ENCODE measurements at regions of chr2 and their contacts with region 1.

Region 1: DNA sequence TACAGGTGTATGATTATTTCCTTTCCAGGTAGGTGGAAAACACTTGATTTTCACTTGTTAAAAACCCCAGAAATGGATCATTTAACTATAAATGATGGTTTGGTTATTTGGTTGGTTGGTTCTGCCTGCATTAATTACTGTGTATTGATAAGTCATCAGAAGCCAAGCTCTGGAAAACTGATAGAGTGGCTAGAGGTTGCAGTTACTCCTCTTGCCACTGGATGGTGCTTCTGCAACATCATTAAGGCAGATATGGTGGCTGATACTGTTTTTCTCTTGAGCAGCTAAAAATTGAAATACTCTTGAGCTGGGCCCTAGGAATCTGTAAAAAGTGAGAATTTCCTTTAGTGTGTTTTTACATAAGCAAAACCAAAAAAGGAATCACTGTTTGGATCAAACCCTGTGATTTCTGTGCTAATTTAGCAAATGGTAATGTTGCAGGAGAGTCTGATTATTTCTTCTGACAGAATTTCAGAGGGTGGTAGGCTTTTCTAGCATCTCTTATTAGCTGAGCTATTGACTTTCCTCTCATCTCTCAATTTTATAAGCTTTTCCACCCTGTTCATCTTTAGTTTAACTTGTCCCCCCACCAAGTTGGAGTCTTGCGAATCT is 54.3 kb downstream of the RAB10 start:
- DNase-seq: peak; percentile 37
- H3K4me3 ChIP-seq: no peak overlapping the region
- H3K27ac ChIP-seq: no peak overlapping the region
- H3K4me1 ChIP-seq: no peaks in the 10 kb centered on the region
- H3K27me3 ChIP-seq: no peaks in the 10 kb centered on the region
- CTCF ChIP-seq: peak; percentile 56 to 63
- POLR2A ChIP-seq: no peak

Region 2: DNA sequence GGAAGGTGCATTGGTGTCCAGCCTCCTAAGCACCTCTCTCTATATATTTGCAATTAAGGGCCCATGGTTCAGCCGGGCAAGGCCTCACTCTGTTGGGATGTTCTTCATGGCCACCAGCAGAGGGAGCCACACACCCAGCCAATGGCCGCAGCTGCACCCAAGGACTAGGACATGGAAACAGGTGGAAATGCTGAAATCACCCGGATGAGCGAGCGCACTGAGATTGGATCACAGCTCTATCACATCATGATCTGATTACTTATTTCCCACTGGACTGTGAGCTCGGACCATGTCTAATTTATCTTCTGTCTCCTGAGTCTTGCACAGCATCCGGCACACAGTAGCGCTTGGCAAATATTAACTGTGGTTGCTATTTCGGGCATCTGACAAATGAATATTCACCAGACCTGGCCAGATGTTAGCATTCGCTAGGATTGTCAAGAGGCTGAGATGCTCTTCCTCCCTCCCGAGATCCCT is 137.0 kb before region 1 on chr2:
- CTCF ChIA-PET with region 1: interaction called, 5 read pairs
- POLR2A ChIA-PET with region 1: no interaction called
- dilution Hi-C with region 1: no loop called
- intact Hi-C with region 1: loop called (anchors 1 kb)
- DNase-seq: peak; percentile 86
- H3K4me3 ChIP-seq: no peak overlapping the region
- H3K27ac ChIP-seq: no peak overlapping the region
- H3K4me1 ChIP-seq: no peaks in the 10 kb centered on the region
- H3K27me3 ChIP-seq: no peaks in the 10 kb centered on the region
- CTCF ChIP-seq: peak; percentile 88 to 95
- POLR2A ChIP-seq: no peak

Region 3: GRCh38 chr2:26068602-26069298 is 19.4 kb before region 1 on chr2:
- CTCF ChIA-PET with region 1: interaction called, 12 read pairs
- POLR2A ChIA-PET with region 1: interaction called, 3 read pairs
- dilution Hi-C with region 1: no loop called
- intact Hi-C with region 1: no loop called
- DNase-seq: peak; percentile 86
- H3K4me3 ChIP-seq: no peak overlapping the region
- H3K27ac ChIP-seq: peak overlapping the region; percentile 57
- H3K4me1 ChIP-seq: peaks cover 20% of the 10 kb centered on the region
- H3K27me3 ChIP-seq: no peaks in the 10 kb centered on the region
- CTCF ChIP-seq: no peak
- POLR2A ChIP-seq: no peak

Region 4: DNA sequence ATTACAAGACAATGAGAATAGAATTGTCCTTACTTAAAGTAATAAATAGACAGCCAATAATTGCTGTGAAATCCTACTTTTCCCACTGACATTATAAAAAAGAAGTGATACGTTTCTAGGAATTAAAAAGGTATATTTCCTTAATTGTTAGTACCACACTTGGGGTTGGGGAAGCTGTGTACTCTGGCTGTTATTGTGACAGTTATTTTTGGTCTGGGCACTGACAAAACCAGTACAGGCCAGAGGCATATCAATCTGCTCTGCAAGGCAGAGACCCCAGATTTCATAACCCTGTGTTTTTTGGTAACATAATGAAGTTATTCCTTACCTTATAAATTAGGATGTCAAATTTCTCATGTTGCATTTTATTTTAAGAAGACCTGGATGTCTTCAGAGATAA is 12.2 kb after region 1 on chr2:
- CTCF ChIA-PET with region 1: interaction called, 12 read pairs
- POLR2A ChIA-PET with region 1: no interaction called
- dilution Hi-C with region 1: no loop called
- intact Hi-C with region 1: no loop called
- DNase-seq: no peak
- H3K4me3 ChIP-seq: no peak overlapping the region
- H3K27ac ChIP-seq: no peak overlapping the region
- H3K4me1 ChIP-seq: no peaks in the 10 kb centered on the region
- H3K27me3 ChIP-seq: no peaks in the 10 kb centered on the region
- CTCF ChIP-seq: no peak
- POLR2A ChIP-seq: no peak

Region 5: GRCh38 chr2:26184555-26185303 is 96.6 kb after region 1 on chr2:
- CTCF ChIA-PET with region 1: interaction called, 26 read pairs
- POLR2A ChIA-PET with region 1: no interaction called
- dilution Hi-C with region 1: no loop called
- intact Hi-C with region 1: no loop called
- DNase-seq: peak; percentile 86
- H3K4me3 ChIP-seq: peak overlapping the region; percentile 50 to 52 (median 51)
- H3K27ac ChIP-seq: no peak overlapping the region
- H3K4me1 ChIP-seq: peaks cover 3% of the 10 kb centered on the region
- H3K27me3 ChIP-seq: no peaks in the 10 kb centered on the region
- CTCF ChIP-seq: peak; percentile 70 to 84
- POLR2A ChIP-seq: peak; percentile 53